GM10248 (cell line): ENCODE measurements at regions of chr7 and their contacts with region 1.

Region 1: DNA sequence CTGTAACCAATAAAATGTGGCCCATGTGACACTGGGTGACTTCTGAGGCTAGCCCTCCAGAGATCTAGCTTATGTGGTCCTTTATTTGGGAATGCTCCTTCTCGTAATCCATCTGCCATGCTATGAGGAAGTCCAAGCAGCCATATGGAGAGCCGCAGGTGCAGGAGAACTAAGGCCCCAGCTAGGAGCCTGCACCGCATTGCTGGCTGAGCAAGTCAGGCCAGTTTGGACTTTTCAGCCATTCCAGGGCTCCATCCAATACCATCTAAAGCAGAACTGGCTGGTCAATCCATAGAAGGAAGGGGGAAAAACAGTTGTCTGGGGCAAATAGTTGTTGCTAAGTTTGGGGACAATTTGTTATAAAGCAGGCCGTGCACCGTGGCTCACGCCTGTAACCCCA is 32.6 kb downstream of the KLRG2 start:
- DNase-seq: no peak
- CTCF ChIP-seq: no peak

Region 2: GRCh38 chr7:139431010-139431409 is 19.8 kb before region 1 on chr7:
- CTCF ChIA-PET with region 1: interaction called, 20 read pairs
- POLR2A ChIA-PET with region 1: no interaction called
- DNase-seq: no peak
- CTCF ChIP-seq: no peak